GM18951 (cell line): ENCODE measurements at regions of chr2 and their contacts with region 1.

Region 1: DNA sequence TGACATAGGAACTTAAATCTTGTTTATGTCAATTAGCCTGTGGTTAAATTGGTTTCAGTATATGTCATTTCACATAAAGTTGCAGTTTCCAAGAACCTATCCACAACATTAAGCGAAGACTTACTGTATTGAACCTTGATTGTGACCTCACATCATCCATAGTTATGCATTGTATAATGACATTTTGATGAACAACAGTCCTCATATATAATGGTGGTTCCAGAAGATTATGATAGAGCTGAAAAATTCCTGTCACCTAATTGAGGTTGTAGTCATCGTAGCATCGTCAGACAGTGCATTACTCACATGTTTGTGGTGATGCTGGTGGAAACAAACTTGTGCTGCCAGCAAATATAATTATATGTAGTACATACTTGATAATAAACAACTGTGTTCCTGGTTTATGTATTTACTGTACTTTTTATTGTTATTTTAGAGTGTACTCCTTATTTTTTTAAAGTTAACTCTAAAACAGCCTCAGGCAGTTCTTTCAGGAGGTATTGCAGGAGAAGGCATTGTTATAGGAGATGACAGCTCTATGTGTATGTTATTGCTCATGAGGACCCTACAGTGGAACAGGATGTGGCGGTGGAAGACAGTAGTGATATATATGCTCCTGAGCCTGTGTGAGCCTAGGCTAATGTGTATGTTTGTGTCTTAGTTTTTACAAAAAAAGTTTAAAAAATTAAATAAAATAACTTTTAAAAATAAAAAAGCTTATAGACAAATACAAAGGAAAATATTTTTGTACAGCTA is 56.6 kb downstream of the UBE2E3 start:
- POLR2A ChIP-seq: no peak

Region 2: DNA sequence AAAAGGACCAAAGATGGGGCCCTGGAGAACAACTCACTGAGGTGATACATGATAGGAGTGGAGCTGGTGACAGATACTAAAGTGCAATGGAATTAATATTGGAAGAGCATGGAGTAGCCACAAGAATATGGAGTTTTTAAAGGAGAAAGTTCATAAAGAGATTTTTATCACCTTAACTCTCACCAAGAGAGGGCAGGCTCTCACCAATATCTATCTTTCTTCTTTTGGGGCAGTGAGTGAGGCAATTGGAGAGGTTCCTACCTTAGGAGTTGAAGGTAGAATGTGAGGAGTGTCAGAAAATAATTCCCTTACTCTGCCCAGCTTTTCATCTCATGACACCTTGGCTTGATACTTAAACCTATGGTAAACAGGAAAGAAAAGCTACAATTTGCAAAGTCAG is 796.3 kb before region 1 on chr2:
- in situ Hi-C with region 1: loop called (anchors 25 kb)
- POLR2A ChIP-seq: no peak